ENCODE measurements at regions of chr12 and their contacts with region 1.

Region 1: GRCh38 chr12:111313833-111314259 is 55.0 kb downstream of the PHETA1 start:
- DNase-seq: peak; percentile 77
- H3K4me3 Mint-ChIP-seq: no peak overlapping the region
- H3K27ac Mint-ChIP-seq: no peak overlapping the region
- H3K4me1 Mint-ChIP-seq: peaks cover 11% of the 10 kb centered on the region
- H3K27me3 Mint-ChIP-seq: peaks cover 10% of the 10 kb centered on the region

Region 2: DNA sequence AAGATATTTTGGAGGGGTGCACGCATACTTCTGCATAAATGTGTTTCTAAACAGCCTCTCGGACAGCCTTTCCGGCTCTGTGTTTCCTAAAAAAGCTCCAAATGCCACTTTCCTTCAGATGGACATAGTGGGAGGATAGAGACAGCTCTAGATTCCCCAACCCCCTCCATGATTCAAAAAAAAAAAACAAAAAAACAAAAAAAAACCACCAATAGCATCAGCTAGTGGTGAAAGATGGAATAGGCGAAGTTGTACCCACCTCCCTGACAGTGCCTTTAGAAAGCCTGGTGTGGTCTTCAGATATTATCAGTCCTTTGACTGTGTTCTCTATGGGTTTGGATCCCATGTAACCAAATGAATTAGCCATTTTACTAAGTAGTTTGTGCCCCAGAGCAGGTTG is 39.1 kb before region 1 on chr12:
- CTCF ChIA-PET with region 1: interaction called, 5 read pairs
- intact Hi-C with region 1: loop called (anchors 5 kb)
- DNase-seq: no peak
- H3K4me3 Mint-ChIP-seq: no peak overlapping the region
- H3K27ac Mint-ChIP-seq: no peak overlapping the region
- H3K4me1 Mint-ChIP-seq: peaks cover 1% of the 10 kb centered on the region
- H3K27me3 Mint-ChIP-seq: no peaks in the 10 kb centered on the region